IMR-90 (cell line): ENCODE measurements at regions of chr15 and their contacts with region 1.

Region 1: GRCh38 chr15:55290528-55291057 is 980 bp upstream of the RAB27A start:
- DNase-seq: peak; percentile 70
- ATAC-seq: peak; percentile 91
- H3K4me3 ChIP-seq: peak overlapping the region; percentile 68
- H3K27ac ChIP-seq: no peak overlapping the region; the same call in 1 of the 2 replicates
- H3K4me1 ChIP-seq: no peaks in the 10 kb centered on the region
- H3K27me3 ChIP-seq: no peaks in the 10 kb centered on the region
- CTCF ChIP-seq: peak; percentile 96
- POLR2A ChIP-seq: no peak
- RAD21 ChIP-seq: peak; percentile 97

Region 2: GRCh38 chr15:54082836-54083492 is 1207.6 kb before region 1 on chr15:
- CTCF ChIA-PET with region 1: no interaction called
- POLR2A ChIA-PET with region 1: no interaction called
- dilution Hi-C with region 1: no loop called
- in situ Hi-C with region 1: no loop called
- intact Hi-C with region 1: loop called (anchors 10 kb)
- DNase-seq: peak; percentile 0
- ATAC-seq: peak; percentile 63; the same call in 1 of the 2 replicates
- H3K4me3 ChIP-seq: no peak overlapping the region
- H3K27ac ChIP-seq: no peak overlapping the region
- H3K4me1 ChIP-seq: no peaks in the 10 kb centered on the region
- H3K27me3 ChIP-seq: no peaks in the 10 kb centered on the region
- CTCF ChIP-seq: peak; percentile 55
- POLR2A ChIP-seq: no peak
- RAD21 ChIP-seq: peak; percentile 53

Region 3: GRCh38 chr15:55241891-55242290 is 48.7 kb before region 1 on chr15:
- CTCF ChIA-PET with region 1: no interaction called
- POLR2A ChIA-PET with region 1: no interaction called
- dilution Hi-C with region 1: no loop called
- in situ Hi-C with region 1: no loop called
- intact Hi-C with region 1: no loop called
- DNase-seq: peak; percentile 71
- ATAC-seq: no peak; the same call in 1 of the 2 replicates
- H3K4me3 ChIP-seq: no peak overlapping the region
- H3K27ac ChIP-seq: no peak overlapping the region
- H3K4me1 ChIP-seq: peaks cover 2% of the 10 kb centered on the region
- H3K27me3 ChIP-seq: no peaks in the 10 kb centered on the region
- CTCF ChIP-seq: no peak
- POLR2A ChIP-seq: no peak
- RAD21 ChIP-seq: no peak

Region 4: GRCh38 chr15:55279746-55280351 is 10.7 kb before region 1 on chr15:
- CTCF ChIA-PET with region 1: no interaction called
- POLR2A ChIA-PET with region 1: no interaction called
- dilution Hi-C with region 1: no loop called
- in situ Hi-C with region 1: no loop called
- intact Hi-C with region 1: no loop called
- DNase-seq: peak; percentile 95
- ATAC-seq: peak; percentile 66
- H3K4me3 ChIP-seq: no peak overlapping the region
- H3K27ac ChIP-seq: no peak overlapping the region
- H3K4me1 ChIP-seq: peaks cover 13% of the 10 kb centered on the region
- H3K27me3 ChIP-seq: no peaks in the 10 kb centered on the region
- CTCF ChIP-seq: no peak
- POLR2A ChIP-seq: no peak
- RAD21 ChIP-seq: no peak